ENCODE measurements at regions of chr1 and their contacts with region 1.

Region 1: GRCh38 chr1:53860967-53861411 is 22.9 kb upstream of the NDC1 start:
- DNase-seq: peak; percentile 66
- H3K4me3 Mint-ChIP-seq: no peak overlapping the region
- H3K27ac Mint-ChIP-seq: no peak overlapping the region
- H3K4me1 Mint-ChIP-seq: peaks cover 10% of the 10 kb centered on the region
- H3K27me3 Mint-ChIP-seq: no peaks in the 10 kb centered on the region

Region 2: DNA sequence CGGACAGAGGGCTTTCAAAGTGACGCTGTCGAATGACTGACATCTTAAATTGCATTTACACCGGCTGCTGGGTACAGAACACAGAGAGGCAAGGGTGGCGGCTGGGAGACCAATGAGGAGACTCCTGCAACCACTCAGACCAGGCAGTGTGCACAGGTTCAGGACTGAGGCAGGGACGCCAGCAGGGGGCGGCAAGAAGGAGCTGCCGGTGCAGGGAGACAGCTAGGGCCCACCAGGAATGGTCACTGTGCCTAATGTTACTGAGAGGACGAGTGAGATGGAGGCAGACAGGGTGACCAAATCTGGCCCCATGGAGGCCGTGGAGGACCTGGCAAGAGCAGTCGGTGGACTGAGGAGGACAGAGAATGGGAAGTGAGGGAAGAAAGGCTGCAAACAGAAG is 145.5 kb before region 1 on chr1:
- CTCF ChIA-PET with region 1: no interaction called
- DNase-seq: peak; percentile 28
- H3K4me3 Mint-ChIP-seq: no peak overlapping the region
- H3K27ac Mint-ChIP-seq: no peak overlapping the region
- H3K4me1 Mint-ChIP-seq: no peaks in the 10 kb centered on the region
- H3K27me3 Mint-ChIP-seq: peaks cover 21% of the 10 kb centered on the region

Region 3: GRCh38 chr1:53847980-53848379 is 13.0 kb before region 1 on chr1:
- CTCF ChIA-PET with region 1: interaction called, 13 read pairs
- DNase-seq: no peak
- H3K4me3 Mint-ChIP-seq: no peak overlapping the region
- H3K27ac Mint-ChIP-seq: no peak overlapping the region
- H3K4me1 Mint-ChIP-seq: no peaks in the 10 kb centered on the region
- H3K27me3 Mint-ChIP-seq: peaks cover 14% of the 10 kb centered on the region

Region 4: GRCh38 chr1:53878492-53879105 is 17.6 kb after region 1 on chr1:
- CTCF ChIA-PET with region 1: interaction called, 60 read pairs
- DNase-seq: no peak
- H3K4me3 Mint-ChIP-seq: no peak overlapping the region
- H3K27ac Mint-ChIP-seq: no peak overlapping the region
- H3K4me1 Mint-ChIP-seq: no peaks in the 10 kb centered on the region
- H3K27me3 Mint-ChIP-seq: no peaks in the 10 kb centered on the region

Region 5: DNA sequence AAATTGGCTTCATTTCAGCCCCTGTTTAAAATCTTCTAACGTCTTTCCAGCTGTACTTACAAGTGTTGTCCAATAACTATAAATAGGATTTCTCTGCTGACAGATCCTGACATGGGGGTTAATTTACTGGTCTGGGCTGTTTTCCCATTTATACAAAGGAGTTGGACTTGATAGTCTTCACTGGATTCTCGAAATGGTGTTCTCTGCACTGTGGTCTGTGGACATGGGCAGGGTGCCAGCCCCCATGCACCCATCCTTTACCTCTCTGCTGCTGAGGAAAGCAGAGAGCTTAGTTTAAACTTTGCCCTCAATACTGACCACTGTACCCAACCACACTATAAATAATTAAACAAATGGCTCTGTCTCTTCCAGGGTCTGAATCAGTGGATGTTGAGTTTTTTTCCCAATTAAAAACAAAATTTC is 38.2 kb after region 1 on chr1:
- CTCF ChIA-PET with region 1: interaction called, 12 read pairs
- DNase-seq: no peak
- H3K4me3 Mint-ChIP-seq: no peak overlapping the region
- H3K27ac Mint-ChIP-seq: no peak overlapping the region
- H3K4me1 Mint-ChIP-seq: peaks cover 6% of the 10 kb centered on the region
- H3K27me3 Mint-ChIP-seq: peaks cover 11% of the 10 kb centered on the region

Region 6: DNA sequence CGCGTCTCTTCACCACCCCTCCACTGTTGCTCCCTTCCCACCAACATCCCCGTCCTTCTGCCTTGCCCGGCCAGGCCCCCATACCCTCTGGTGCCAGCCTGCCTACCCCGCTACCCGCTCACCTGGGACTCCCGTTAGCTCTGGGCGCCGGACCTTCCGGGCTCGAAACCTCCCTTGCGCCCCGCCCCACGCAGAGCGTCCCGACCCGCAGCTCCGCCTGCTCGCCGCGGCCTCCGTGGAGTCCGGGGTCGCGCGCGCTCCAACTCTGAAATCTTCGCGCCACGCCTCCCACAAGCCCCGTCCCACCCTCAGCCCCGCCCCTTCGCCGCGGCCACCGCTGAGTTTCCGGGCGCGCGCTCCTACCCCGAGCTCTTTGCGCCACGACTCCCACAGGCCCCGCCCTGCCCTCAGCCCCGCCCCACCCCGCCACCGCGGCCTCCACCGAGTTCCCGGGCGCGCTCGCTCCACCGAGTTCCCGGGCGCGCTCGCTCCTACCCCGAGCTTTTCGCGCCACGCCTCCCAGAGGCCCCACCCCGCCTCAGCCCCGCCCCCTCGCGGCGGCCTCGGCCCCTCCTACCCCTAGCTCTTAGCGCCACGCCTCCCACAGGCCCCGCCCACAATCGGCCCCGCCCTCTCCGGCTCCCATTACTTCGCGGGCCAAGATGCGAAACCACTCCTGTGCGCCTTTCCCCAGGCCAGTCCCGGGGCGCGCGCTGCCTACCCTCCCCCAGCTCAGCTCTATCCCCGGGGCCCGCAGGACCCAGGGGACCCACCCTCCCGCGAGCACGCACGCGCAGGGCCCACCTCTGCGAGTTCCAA is 84.7 kb after region 1 on chr1 and contains the start of gene IFT25:
- CTCF ChIA-PET with region 1: interaction called, 67 read pairs
- DNase-seq: peak; percentile 98
- H3K4me3 Mint-ChIP-seq: peak within 1 kb of the TSS; percentile 97
- H3K27ac Mint-ChIP-seq: peak within 1 kb of the TSS; percentile 97
- H3K4me1 Mint-ChIP-seq: peaks cover 57% of the 10 kb centered on the region
- H3K27me3 Mint-ChIP-seq: no peaks in the 10 kb centered on the region

Region 7: GRCh38 chr1:53959664-53960250 is 98.8 kb after region 1 on chr1:
- CTCF ChIA-PET with region 1: interaction called, 130 read pairs
- DNase-seq: no peak
- H3K4me3 Mint-ChIP-seq: no peak overlapping the region
- H3K27ac Mint-ChIP-seq: no peak overlapping the region
- H3K4me1 Mint-ChIP-seq: peaks cover 15% of the 10 kb centered on the region
- H3K27me3 Mint-ChIP-seq: no peaks in the 10 kb centered on the region

Region 8: DNA sequence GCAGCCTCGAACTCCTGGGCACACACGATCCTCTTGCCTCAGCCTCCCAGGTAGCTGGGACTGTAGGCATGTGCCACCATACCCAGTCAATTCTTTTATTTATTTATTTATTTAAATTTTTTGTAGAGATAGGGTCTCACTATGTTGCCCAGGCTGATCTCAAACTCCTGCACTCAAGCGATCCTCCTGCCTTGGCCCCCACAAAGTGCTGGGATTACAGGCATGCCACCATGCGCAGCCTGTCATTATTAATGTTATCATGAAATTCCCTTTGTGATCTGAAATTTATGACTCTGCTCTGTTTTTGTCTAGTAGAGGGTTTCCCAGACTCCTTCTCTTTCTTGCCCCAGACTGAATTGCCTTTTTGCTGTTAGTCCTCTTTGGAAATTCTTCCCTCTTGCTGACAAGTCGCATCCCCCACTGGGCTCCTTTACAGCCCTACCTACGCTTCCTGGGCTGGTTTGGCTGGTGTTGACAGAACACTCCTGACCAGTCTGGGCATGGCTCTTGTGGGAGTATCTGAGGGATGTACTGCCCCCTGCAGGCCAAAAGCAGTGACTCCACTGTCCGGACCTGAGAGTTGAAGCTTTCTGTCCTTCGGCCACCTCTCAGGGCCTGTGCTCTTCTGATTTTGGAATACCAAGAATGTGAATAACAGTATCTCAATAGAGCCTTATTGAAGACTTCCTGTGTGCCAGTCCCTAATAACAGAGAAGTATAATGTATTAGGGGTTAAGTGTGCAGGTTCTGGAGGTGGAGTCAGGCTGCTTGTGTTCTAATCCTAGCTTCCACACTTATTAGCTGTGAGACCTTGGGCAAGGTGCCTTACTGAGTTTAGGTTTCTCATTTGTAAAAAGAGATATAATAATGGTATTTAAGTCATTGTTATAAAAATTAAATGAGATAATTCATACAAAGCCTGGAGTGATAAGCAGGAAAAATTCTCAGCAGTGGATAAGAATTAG is 220.6 kb after region 1 on chr1:
- CTCF ChIA-PET with region 1: interaction called, 21 read pairs
- DNase-seq: peak; percentile 77
- H3K4me3 Mint-ChIP-seq: no peak overlapping the region
- H3K27ac Mint-ChIP-seq: no peak overlapping the region
- H3K4me1 Mint-ChIP-seq: peaks cover 2% of the 10 kb centered on the region
- H3K27me3 Mint-ChIP-seq: no peaks in the 10 kb centered on the region